Right cardiac atrium (tissue), 5 donors: ENCODE measurements at regions of chr2 and their contacts with region 1.

Region 1: DNA sequence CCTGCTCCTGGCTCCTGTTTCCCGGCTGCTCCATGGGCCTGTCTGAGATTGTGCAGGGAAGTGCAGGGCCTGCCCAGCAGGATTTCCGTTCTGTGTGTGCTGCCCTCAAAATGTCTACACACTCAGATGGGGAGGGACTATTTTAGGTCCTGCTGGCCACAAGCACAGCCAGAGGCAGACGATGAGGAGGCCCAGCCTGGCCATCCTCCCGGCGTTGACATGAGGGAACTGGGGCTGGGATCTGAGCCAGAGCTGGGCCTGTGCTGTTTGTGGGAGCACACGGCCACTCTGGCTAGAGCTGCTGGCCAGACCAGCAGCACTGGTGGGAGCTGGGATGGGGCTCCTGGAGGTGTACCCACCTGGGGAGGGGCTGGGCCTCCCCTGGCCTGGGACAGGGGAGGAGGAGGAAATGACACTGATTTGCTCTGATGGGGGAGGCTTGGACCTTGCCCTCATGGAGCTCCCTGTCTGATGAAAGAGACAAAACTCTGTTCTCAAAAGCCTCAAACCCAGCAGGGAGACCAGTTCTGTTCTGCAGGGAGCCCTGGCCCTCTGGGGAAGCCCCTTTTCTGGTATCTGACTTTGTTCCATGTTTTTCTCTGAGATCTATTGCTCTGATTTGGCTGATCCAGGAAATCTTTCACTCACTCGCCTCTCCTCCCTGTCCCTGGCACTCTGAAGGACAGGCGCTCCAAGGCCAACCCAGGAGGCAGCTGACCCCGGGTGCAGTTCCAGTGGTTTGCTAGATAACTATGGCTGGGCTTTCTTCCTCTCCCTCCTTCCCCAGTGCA is 161.8 kb downstream of the DYSF start:
- DNase-seq: peak; percentile 94 to 98 (median 97)
- ATAC-seq: peak; percentile 94 to 95
- H3K4me3 ChIP-seq: no peak overlapping the region
- H3K27ac ChIP-seq: peak overlapping the region; percentile 82
- H3K4me1 ChIP-seq: peaks cover 26% of the 10 kb centered on the region
- H3K27me3 ChIP-seq: no peaks in the 10 kb centered on the region

Region 2: GRCh38 chr2:71662611-71663394 is 47.6 kb after region 1 on chr2:
- intact Hi-C with region 1: no loop called
- DNase-seq: no peak
- ATAC-seq: peak in 1 of 2 donors; percentile 44
- H3K4me3 ChIP-seq: no peak overlapping the region
- H3K27ac ChIP-seq: no peak overlapping the region
- H3K4me1 ChIP-seq: no peaks in the 10 kb centered on the region
- H3K27me3 ChIP-seq: no peaks in the 10 kb centered on the region

Region 3: GRCh38 chr2:71705171-71705960 is 90.2 kb after region 1 on chr2:
- intact Hi-C with region 1: loop called in 1 of 4 experiments (anchors 5 kb)
- DNase-seq: peak in 2 of 3 donors; percentile 72 to 74
- ATAC-seq: peak; percentile 13 to 17
- H3K4me3 ChIP-seq: no peak overlapping the region
- H3K27ac ChIP-seq: peak overlapping the region; percentile 1
- H3K4me1 ChIP-seq: peaks cover 21% of the 10 kb centered on the region
- H3K27me3 ChIP-seq: no peaks in the 10 kb centered on the region